ENCODE measurements at regions of chr1 and their contacts with region 1.

Region 1: DNA sequence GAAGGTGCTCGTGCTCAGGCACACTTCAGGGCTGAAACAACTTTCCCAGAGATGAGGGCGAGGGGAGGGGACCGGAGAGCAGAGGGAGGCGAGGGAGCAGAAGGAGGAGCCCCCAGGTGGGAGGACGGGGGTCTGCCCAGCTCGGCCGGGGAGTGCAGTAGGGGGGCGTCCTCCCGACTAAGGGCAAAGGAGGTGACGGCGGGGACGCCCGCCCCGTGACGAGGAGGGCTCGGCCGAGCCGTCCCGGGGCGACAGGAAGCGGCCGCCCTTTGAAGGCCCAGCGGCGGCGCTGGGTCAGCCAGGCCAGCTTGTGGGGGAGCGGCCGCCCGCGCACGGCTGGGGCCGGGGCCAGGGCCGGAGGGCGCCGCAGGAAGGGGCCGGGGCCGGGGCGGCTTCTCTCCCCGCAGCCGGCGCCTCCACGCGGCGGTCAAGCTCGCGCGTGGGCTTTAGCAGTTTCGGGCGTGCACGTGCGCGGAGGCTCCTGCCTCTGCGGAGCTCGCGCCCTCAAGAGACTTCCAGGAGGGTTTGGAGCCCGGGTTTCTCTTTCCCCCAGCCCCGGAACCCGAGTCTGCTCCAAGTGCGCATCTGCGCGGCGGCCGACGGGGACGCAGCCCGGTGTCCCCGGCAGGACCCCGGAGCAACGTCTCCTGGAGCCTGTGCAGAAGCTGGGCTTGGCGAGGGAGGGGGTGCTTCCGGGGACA is 100.8 kb upstream of the SLC45A1 start:
- DNase-seq: no peak
- H3K4me3 ChIP-seq: no peak overlapping the region
- H3K27me3 ChIP-seq: no peaks in the 10 kb centered on the region
- CTCF ChIP-seq: no peak

Region 2: DNA sequence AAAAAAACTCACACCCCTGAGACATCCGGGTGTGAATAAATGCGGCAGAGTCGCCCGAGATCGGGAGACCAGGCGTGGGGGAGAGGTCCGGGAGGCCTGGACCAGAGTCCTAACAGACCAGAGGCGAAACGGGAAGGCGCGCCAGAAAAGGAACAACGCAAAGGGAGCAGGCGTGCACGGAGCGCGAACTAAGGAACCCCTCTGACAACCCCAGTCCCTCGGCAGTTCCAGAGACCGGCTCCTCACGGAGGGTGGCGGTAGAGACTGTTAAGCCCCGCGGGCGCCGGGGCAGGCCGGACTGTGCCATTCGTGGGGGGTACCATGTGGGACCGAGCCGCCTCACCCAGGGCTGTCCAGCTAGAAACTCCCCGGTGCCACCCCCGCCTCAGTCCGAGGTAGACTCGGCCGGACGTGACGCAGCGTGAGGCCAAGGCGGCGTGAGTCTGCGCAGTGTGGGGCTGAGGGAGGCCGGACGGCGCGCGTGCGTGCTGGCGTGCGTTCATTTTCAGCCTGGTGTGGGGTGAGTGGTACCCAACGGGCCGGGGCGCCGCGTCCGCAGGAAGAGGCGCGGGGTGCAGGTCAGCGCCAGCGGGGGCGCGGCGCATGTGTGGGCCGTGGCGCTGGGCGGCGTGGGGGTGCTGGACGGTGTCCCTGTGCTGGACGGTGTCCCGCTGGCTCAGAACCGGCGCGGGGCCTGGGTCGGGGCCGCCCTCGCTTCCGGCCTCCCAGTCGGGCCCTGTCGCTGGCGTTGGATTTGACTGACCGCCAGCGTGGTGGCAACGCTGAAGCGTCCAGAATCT is 255.7 kb before region 1 on chr1 and contains the start of gene PARK7:
- CTCF ChIA-PET with region 1: no interaction called
- POLR2A ChIA-PET with region 1: interaction called, 13 read pairs
- DNase-seq: peak; percentile 91
- H3K4me3 ChIP-seq: peak within 1 kb of the TSS; percentile 85
- H3K27me3 ChIP-seq: no peaks in the 10 kb centered on the region
- CTCF ChIP-seq: peak; percentile 64
- polyA plus RNA-seq, gene PARK7: 242 and 358 TPM in 2 replicates

Region 3: GRCh38 chr1:8204823-8205222 is 12.3 kb before region 1 on chr1:
- CTCF ChIA-PET with region 1: interaction called, 4 read pairs
- POLR2A ChIA-PET with region 1: interaction called, 12 read pairs
- DNase-seq: no peak
- H3K4me3 ChIP-seq: no peak overlapping the region
- H3K27me3 ChIP-seq: no peaks in the 10 kb centered on the region
- CTCF ChIP-seq: no peak

Region 4: GRCh38 chr1:8239306-8240023 is 22.3 kb after region 1 on chr1:
- CTCF ChIA-PET with region 1: no interaction called
- POLR2A ChIA-PET with region 1: no interaction called
- DNase-seq: no peak
- H3K4me3 ChIP-seq: no peak overlapping the region
- H3K27me3 ChIP-seq: no peaks in the 10 kb centered on the region
- CTCF ChIP-seq: no peak

Region 5: GRCh38 chr1:8276173-8276914 is 59.2 kb after region 1 on chr1:
- CTCF ChIA-PET with region 1: no interaction called
- POLR2A ChIA-PET with region 1: interaction called, 12 read pairs
- DNase-seq: no peak
- H3K4me3 ChIP-seq: no peak overlapping the region
- H3K27me3 ChIP-seq: peaks cover 1% of the 10 kb centered on the region; the same call in 1 of the 2 replicates
- CTCF ChIP-seq: no peak

Region 6: GRCh38 chr1:8302081-8302956 is 85.2 kb after region 1 on chr1:
- CTCF ChIA-PET with region 1: no interaction called
- POLR2A ChIA-PET with region 1: no interaction called
- DNase-seq: no peak
- H3K4me3 ChIP-seq: no peak overlapping the region
- H3K27me3 ChIP-seq: no peaks in the 10 kb centered on the region; the same call in 1 of the 2 replicates
- CTCF ChIP-seq: no peak

Region 7: GRCh38 chr1:8926707-8927694 is 709.8 kb after region 1 on chr1:
- CTCF ChIA-PET with region 1: no interaction called
- POLR2A ChIA-PET with region 1: no interaction called
- DNase-seq: no peak
- H3K4me3 ChIP-seq: no peak overlapping the region
- H3K27me3 ChIP-seq: peaks cover 6% of the 10 kb centered on the region
- CTCF ChIP-seq: no peak